ENCODE measurements at regions of chr1 and their contacts with region 1.

Region 1: GRCh38 chr1:31715087-31715872 is 11.5 kb upstream of the COL16A1 start:
- DNase-seq: peak; percentile 77
- H3K4me3 ChIP-seq: peak overlapping the region; percentile 33
- H3K27me3 ChIP-seq: peaks cover 2% of the 10 kb centered on the region
- CTCF ChIP-seq: peak; percentile 95

Region 2: DNA sequence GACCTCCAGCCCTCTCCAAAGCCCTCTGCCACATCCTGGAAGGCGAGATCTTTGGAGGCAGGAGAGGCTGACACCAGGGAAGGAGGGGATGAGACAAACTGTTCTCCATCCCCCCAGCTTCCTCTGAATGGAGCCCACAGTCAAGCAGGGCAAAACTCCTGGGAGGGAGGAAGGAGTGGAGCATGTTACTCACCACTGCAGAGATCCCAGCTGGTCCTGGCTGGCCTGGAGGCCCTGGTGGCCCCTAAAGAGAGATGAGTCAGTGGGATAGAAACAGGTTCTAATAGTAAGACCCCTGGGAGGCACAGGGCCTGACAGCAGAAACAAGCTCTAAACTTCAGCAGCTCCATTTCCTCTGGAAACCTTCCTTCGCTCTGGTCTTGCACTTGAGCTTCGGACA is 56.6 kb before region 1 on chr1:
- CTCF ChIA-PET with region 1: interaction called, 45 read pairs
- POLR2A ChIA-PET with region 1: interaction called, 3 read pairs
- DNase-seq: no peak
- H3K4me3 ChIP-seq: no peak overlapping the region
- H3K27me3 ChIP-seq: no peaks in the 10 kb centered on the region
- CTCF ChIP-seq: no peak

Region 3: DNA sequence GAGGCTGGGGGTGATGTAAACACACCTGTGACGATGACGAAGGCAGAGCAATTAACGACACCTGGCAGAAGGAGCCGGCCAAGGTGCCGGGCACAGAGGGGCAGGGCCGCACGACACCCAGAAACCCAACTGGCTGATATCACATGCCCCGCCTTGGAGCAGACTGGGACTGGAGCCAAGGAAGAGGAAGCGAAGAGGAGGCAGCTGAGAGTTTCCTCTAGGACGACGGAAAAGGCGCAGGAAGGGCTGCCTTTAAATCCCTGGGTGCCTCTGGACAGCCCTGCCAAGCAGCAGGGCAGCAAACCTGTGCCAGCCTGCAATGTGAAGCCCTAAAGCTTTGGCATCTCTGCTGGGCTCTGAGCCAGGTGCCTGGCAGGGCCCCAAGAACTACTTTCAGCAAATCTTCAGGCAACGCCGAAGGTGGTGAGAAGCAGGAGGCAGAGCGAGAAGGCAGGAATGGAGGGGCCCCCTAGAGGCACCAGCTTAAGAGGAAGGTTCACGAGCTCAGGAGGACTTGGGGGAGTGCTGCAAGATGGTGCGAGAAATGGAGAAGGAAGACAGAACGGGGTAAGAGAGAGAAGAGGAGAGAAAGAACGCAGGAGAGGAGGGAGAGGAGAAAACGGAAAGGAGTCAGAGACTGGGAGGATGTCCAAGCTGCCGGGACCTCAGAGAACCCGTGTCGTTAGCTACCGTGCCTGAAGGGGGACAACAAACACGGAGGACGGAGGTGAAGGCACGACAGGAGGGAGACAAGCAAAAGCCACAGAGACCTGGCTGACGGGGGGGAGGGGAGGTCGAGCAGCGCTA is 45.3 kb before region 1 on chr1:
- CTCF ChIA-PET with region 1: interaction called, 45 read pairs
- POLR2A ChIA-PET with region 1: no interaction called
- DNase-seq: no peak
- H3K4me3 ChIP-seq: no peak overlapping the region
- H3K27me3 ChIP-seq: no peaks in the 10 kb centered on the region
- CTCF ChIP-seq: peak; percentile 19; the same call in 1 of the 2 replicates

Region 4: GRCh38 chr1:31705080-31705866 is 10.0 kb before region 1 on chr1:
- CTCF ChIA-PET with region 1: interaction called, 86 read pairs
- POLR2A ChIA-PET with region 1: interaction called, 12 read pairs
- DNase-seq: no peak
- H3K4me3 ChIP-seq: no peak overlapping the region
- H3K27me3 ChIP-seq: no peaks in the 10 kb centered on the region
- CTCF ChIP-seq: peak; percentile 55

Region 5: DNA sequence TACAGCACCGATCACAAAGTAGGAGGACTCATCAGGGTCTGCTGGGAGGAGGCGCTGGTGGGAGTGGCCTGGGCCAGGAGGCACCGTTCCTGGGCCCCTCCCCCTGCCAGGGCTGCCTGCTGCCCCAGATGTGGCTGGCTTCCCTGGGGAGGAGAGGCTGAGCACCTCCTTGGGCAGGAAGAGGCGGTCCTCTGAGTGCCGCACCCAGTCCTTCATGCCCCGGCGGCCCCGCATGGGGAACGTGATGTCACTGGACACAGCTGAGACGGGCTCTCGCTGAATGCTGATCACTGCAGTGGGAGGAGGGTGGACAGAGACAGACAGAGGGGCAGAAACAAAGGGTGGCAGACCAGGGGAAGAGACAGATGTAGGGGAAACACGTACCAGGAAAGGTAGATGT is 24.1 kb after region 1 on chr1:
- CTCF ChIA-PET with region 1: interaction called, 57 read pairs
- POLR2A ChIA-PET with region 1: no interaction called
- DNase-seq: no peak
- H3K4me3 ChIP-seq: no peak overlapping the region
- H3K27me3 ChIP-seq: no peaks in the 10 kb centered on the region
- CTCF ChIP-seq: no peak

Region 6: DNA sequence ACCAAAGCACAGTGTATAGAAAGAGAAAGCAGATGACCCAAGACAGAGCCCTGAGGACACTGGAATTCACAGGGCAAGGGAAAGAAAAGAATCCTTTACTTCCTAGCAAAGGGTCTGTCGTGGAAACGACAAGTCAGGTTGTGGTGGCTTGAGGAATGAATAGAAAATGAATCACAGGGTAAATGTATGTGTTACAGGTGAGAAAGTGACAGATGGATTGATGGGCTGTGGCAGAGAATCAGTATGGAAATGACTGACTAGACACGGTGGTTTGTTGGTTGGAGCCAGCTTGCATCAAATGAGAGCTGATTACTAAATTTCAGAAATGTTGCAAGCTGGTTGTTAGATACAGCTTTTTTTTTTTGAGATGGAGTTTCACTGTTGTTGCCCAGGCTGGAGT is 176.0 kb after region 1 on chr1:
- CTCF ChIA-PET with region 1: no interaction called
- POLR2A ChIA-PET with region 1: no interaction called
- DNase-seq: no peak
- H3K4me3 ChIP-seq: no peak overlapping the region
- H3K27me3 ChIP-seq: no peaks in the 10 kb centered on the region
- CTCF ChIP-seq: no peak

Region 7: DNA sequence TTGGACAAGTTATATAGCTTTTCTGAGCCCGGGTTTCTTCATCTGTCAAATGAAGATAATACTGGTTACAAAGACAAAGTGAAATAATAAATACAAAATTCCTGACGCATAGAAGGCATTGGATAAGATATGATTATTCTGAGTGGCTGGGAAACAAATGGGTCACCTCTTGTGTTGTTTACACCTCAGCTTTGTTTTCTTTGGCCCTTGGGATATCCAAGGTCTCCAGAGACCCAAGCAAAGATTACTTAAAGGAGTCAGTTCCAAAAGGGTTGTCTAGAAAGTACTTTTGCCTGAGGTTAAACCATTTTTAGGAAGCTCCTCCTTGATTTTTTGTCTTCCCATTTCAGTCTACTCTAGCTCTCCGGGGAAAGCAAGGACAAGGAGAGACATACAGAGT is 308.1 kb after region 1 on chr1:
- CTCF ChIA-PET with region 1: no interaction called
- POLR2A ChIA-PET with region 1: no interaction called
- DNase-seq: no peak
- H3K4me3 ChIP-seq: no peak overlapping the region
- H3K27me3 ChIP-seq: no peaks in the 10 kb centered on the region
- CTCF ChIP-seq: no peak

Measured in BJ (cell line).